GM23248 (cell line): ENCODE measurements at regions of chr3 and their contacts with region 1.

Region 1: DNA sequence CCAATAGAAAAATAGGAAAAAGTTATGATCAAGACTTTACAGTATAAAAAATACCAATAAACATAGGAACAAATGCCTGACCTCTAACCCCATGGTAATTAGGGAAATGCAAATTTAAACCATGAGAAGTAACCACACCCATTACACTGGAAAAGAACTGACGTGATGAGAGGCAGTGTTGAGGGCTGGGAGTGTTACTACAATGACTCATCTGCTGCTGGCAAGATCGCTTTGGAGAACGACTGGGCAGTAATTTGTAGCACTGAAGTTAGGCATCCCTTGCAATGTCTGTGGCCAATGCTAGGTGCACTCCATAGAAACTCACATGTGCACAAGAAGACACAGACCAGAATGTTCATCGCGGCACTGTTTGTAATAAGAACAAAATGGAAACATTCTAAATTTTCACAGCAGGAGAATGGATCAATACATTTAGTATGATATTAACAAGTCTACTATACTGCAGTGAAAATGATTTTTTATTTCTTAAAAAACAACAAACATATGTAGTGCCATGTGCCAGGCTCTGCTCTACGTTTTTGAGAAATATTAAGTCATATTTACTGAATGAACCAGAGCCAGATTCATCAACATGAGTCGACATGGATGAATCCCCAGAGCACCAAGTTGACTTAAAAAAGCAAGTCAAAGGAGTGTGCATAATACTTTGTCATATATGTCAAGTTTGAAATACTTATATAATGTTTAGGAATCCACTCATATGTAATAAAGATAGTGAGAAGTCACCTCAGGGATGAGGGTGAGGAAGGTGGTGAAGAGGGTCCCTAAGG is 37.6 kb upstream of the EPHB3 start:
- DNase-seq: peak; percentile 87
- H3K4me3 ChIP-seq: no peak overlapping the region
- H3K27ac ChIP-seq: no peak overlapping the region
- H3K4me1 ChIP-seq: peaks cover 17% of the 10 kb centered on the region
- H3K27me3 ChIP-seq: peaks cover 29% of the 10 kb centered on the region

Region 2: GRCh38 chr3:184371570-184372018 is 152.4 kb before region 1 on chr3:
- in situ Hi-C with region 1: loop called (anchors 10 kb)
- DNase-seq: peak; percentile 95
- H3K4me3 ChIP-seq: no peak overlapping the region
- H3K27ac ChIP-seq: no peak overlapping the region
- H3K4me1 ChIP-seq: peaks cover 28% of the 10 kb centered on the region
- H3K27me3 ChIP-seq: peaks cover under 1% of the 10 kb centered on the region; the same call in 1 of the 2 replicates